Gastrocnemius medialis (tissue), 4 donors: ENCODE measurements at regions of chrX and their contacts with region 1.

Region 1: GRCh38 chrX:19739683-19740082 is 147.7 kb downstream of the SH3KBP1 start:
- DNase-seq: peak in 1 of 2 donors; percentile 23
- ATAC-seq: peak in 1 of 2 donors; percentile 33
- H3K4me3 ChIP-seq: no peak overlapping the region
- H3K27ac ChIP-seq: no peak overlapping the region
- H3K4me1 ChIP-seq: no peaks in the 10 kb centered on the region
- H3K27me3 ChIP-seq: no peaks in the 10 kb centered on the region
- CTCF ChIP-seq: peak; percentile 34 to 63 (median 51)
- POLR2A ChIP-seq: no peak

Region 2: GRCh38 chrX:19593690-19594089 is 146.0 kb before region 1 on chrX:
- in situ Hi-C with region 1: loop called in 1 of 4 experiments (anchors 10 kb)
- intact Hi-C with region 1: loop called (anchors 10 kb)
- DNase-seq: no peak
- ATAC-seq: peak in 1 of 2 donors; percentile 42
- H3K4me3 ChIP-seq: no peak overlapping the region
- H3K27ac ChIP-seq: no peak overlapping the region
- H3K4me1 ChIP-seq: peaks cover 0 to 11% of the 10 kb centered on the region in 2 donors
- H3K27me3 ChIP-seq: no peaks in the 10 kb centered on the region
- CTCF ChIP-seq: peak in 4 of 5 experiments; percentile 20 to 43 (median 30)
- POLR2A ChIP-seq: no peak

Region 3: GRCh38 chrX:19649226-19649995 is 90.3 kb before region 1 on chrX:
- in situ Hi-C with region 1: no loop called
- intact Hi-C with region 1: no loop called
- DNase-seq: no peak
- ATAC-seq: no peak
- H3K4me3 ChIP-seq: no peak overlapping the region
- H3K27ac ChIP-seq: no peak overlapping the region
- H3K4me1 ChIP-seq: no peaks in the 10 kb centered on the region
- H3K27me3 ChIP-seq: no peaks in the 10 kb centered on the region
- CTCF ChIP-seq: no peak
- POLR2A ChIP-seq: no peak